Heart left ventricle (tissue), 16 donors: ENCODE measurements at regions of chr4 and their contacts with region 1.

Region 1: DNA sequence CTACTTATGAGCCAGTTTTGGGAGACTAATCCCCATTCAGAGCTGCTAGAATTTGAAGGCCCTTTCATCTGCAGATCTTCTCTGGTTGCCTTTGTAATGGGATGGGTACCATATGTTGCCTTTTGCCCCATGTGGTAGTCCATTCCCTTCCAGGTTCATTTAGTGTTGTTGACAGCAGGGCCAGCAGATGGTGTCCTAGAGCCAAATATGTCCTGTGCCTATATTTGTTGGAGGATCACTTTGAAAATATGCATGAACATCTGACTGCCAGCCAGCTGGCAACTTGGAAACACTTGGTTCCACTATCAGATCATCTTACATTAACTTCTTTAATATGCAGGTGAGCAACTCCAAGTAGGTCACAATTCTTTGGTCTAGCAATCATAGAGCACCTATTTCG is 30.4 kb downstream of the CFAP299 start:
- DNase-seq: peak in 2 of 5 donors; percentile 8 to 29
- ATAC-seq: peak in 1 of 4 donors; percentile 51
- H3K4me3 ChIP-seq: no peak overlapping the region
- H3K27ac ChIP-seq: no peak overlapping the region
- H3K4me1 ChIP-seq: no peaks in the 10 kb centered on the region
- H3K27me3 ChIP-seq: peaks cover 0 to 15% (median 0%) of the 10 kb centered on the region in 9 donors
- CTCF ChIP-seq: peak in 11 of 12 donors; percentile 12 to 55 (median 41)
- POLR2A ChIP-seq: no peak

Region 2: DNA sequence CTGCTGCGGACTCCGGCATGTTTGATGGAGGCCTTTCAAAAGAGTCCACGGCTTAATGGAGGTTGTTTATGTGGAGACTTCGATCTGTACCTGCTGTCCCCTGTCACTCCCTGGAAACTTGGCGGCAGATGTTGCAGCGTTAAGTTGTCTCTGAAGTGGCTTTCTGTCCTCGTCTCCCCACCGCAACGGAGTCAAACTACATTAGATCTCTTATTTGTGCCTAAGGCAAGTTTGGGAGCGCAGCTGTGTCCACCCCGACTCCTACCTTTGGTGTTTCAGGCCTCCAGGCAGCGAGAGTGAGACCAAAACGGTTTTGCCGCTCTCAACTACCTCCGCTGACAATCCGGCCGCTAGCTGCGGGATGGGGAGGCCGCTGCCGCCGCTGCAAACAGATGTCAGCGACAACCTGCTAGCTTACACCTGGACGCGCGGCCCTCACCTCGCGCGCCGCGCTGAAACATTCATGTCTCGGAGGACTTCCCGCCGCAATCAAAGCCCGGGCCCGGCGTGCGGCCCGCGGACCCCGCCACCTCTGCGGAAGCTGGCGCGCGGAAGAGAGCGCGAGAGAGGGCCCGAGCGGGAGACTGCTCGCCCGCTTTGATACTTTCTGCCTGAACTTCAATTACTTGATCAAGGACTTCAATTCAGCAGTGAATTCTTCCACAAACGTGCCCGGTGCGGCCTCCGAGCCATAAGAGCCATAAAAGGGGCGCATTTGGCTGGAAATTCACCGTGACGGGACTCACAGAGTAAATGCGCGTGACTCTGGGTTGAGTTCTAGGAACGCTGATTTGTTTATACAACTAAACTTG is 401.3 kb before region 1 on chr4:
- intact Hi-C with region 1: no loop called
- DNase-seq: peak in 1 of 5 donors; percentile 35
- ATAC-seq: no peak
- H3K4me3 ChIP-seq: no peak overlapping the region
- H3K27ac ChIP-seq: no peak overlapping the region
- H3K4me1 ChIP-seq: no peaks in the 10 kb centered on the region
- H3K27me3 ChIP-seq: no peaks in the 10 kb centered on the region
- CTCF ChIP-seq: no peak
- POLR2A ChIP-seq: no peak

Region 3: GRCh38 chr4:80989921-80990544 is 624.1 kb after region 1 on chr4:
- intact Hi-C with region 1: loop called (anchors 2 to 10 kb)
- DNase-seq: no peak
- ATAC-seq: no peak
- H3K4me3 ChIP-seq: no peak overlapping the region
- H3K27ac ChIP-seq: no peak overlapping the region
- H3K4me1 ChIP-seq: no peaks in the 10 kb centered on the region
- H3K27me3 ChIP-seq: peaks cover 0 to 4% (median 0%) of the 10 kb centered on the region in 9 donors
- CTCF ChIP-seq: peak; percentile 40 to 72 (median 62)
- POLR2A ChIP-seq: no peak

Region 4: GRCh38 chr4:81040012-81040659 is 674.2 kb after region 1 on chr4:
- intact Hi-C with region 1: loop called in 6 of 10 experiments (anchors 2 to 5 kb)
- DNase-seq: no peak
- ATAC-seq: no peak
- H3K4me3 ChIP-seq: no peak overlapping the region
- H3K27ac ChIP-seq: no peak overlapping the region
- H3K4me1 ChIP-seq: no peaks in the 10 kb centered on the region
- H3K27me3 ChIP-seq: peaks cover 0 to 7% (median 0%) of the 10 kb centered on the region in 9 donors
- CTCF ChIP-seq: peak in 10 of 12 donors; percentile 27 to 58 (median 48)
- POLR2A ChIP-seq: no peak

Region 5: GRCh38 chr4:81052119-81053068 is 686.5 kb after region 1 on chr4:
- intact Hi-C with region 1: loop called in 4 of 10 experiments (anchors 2 to 5 kb)
- DNase-seq: peak in 3 of 5 donors; percentile 11 to 41 (median 24)
- ATAC-seq: peak in 3 of 4 donors; percentile 50 to 61 (median 59)
- H3K4me3 ChIP-seq: no peak overlapping the region
- H3K27ac ChIP-seq: peak overlapping the region in 1 of 12 donors; percentile 7
- H3K4me1 ChIP-seq: peaks cover 0 to 3% (median 0%) of the 10 kb centered on the region in 12 donors
- H3K27me3 ChIP-seq: no peaks in the 10 kb centered on the region
- CTCF ChIP-seq: peak; percentile 37 to 66 (median 52)
- POLR2A ChIP-seq: no peak

Region 6: DNA sequence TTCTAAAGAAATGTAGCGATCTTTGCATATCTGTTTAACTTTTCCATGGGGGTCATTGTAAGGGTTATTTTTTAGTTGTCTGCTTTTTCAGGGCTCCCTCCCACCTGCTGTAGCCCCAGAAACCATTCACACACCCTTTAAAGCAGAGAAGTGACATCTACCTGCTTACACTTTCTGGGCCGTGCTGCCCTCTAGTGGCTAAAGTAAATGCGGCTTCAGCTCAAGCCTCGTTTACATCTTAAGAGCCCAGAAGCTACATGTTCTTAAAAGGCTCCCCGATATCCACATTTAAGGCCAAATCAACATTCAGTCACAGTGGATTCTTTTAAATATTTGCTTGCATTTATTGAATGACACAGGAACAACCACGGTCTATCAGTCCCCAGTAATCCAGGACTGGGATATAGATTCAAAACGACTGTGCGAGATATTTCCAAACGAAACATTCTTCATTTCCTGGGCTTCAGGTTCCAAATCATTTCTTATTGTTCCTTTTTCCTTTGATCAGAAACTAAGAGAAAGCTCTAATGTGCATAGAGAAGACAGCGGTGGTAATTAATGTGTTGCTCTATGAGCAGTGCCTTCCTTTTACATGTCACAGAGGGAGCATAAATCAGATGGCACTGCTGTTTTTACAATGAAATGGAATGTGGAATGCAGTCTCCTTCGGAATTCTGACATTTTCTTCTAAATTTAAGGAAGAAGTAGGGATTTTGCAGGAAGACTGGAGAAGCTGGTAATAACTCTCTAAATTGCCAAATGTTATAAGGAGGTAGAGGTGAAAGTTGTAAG is 985.9 kb after region 1 on chr4:
- intact Hi-C with region 1: loop called in 1 of 10 experiments (anchors 10 kb)
- DNase-seq: peak in 4 of 5 donors; percentile 44 to 71 (median 48)
- ATAC-seq: peak in 3 of 4 donors; percentile 49 to 65 (median 65)
- H3K4me3 ChIP-seq: no peak overlapping the region
- H3K27ac ChIP-seq: no peak overlapping the region
- H3K4me1 ChIP-seq: no peaks in the 10 kb centered on the region
- H3K27me3 ChIP-seq: peaks cover 0 to 4% (median 0%) of the 10 kb centered on the region in 9 donors
- CTCF ChIP-seq: peak; percentile 73 to 94 (median 85)
- POLR2A ChIP-seq: no peak